Mammary epithelial cell (primary cell): ENCODE measurements at regions of chr17 and their contacts with region 1.

Region 1: DNA sequence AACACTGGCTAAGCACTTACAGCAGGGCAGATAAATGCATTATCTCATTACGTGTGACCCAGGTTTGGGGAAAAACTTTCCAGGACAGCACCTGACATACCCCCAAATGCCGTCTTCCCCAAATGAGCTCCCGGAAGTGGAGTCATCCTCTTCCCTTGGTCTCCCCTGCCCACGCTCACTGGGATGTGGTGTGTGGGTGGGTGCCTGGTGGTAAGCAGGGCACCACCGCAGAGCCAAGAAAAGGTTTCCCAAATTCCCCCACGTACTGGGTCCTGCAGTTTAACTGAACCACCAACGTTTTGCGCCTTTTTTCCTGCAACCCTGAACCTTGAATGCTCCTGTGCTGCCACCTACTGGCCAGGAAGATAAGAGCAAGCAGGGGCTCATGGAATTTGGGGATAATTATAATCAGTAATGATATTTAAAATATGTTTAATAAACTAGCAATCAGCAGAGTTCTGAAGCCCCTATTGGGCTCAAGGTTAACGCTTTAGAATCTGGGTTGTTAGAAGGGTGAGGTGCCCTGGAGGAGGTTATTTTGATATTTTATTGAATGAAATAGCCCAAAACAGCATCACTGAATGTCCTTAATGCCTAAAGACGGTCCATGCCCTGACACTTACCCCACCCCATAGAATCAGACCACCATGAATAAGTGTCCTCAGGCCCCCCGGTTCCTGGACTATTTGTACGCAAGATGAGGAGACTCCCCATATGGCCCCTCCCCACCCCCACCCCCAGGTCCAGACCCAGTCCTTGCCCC is 8.0 kb downstream of the SPPL2C start:
- DNase-seq: peak; percentile 22
- H3K4me3 ChIP-seq: no peak overlapping the region
- H3K27ac ChIP-seq: no peak overlapping the region
- H3K4me1 ChIP-seq: no peaks in the 10 kb centered on the region
- H3K27me3 ChIP-seq: no peaks in the 10 kb centered on the region
- CTCF ChIP-seq: peak; percentile 90

Region 2: DNA sequence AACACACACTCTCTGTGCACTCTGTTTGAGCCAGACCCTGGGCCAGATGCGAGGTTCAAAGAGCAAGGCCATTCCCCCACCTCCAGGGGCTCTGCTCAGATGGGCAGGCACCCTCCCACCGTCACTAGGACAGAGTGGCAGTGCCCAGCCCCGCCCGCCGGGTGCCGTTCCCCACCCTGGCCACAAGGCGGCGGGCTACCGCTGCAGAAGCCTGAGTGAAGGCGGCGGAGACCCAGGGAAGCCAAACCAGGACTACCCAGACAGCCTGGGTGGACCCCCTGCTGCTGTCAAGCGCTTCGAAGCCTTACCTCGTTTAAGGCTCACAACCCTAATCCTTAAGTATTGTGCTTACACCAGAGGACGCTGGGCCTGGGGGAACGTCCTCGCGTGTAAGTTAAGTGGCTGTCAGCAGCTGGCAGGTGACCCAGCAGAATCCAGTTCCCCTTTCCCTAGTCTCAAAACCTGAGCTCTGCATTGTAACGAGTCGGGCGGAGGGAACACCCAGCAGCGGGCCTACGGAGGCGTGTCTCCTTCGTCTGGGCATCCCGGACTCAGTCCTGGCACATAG is 424.6 kb before region 1 on chr17:
- CTCF ChIA-PET with region 1: no interaction called
- dilution Hi-C with region 1: no loop called
- in situ Hi-C with region 1: loop called in 1 of 2 experiments (anchors 25 kb)
- intact Hi-C with region 1: loop called (anchors 2 kb)
- DNase-seq: peak; percentile 63
- H3K4me3 ChIP-seq: no peak overlapping the region
- H3K27ac ChIP-seq: no peak overlapping the region
- H3K4me1 ChIP-seq: peaks cover 29% of the 10 kb centered on the region
- H3K27me3 ChIP-seq: no peaks in the 10 kb centered on the region
- CTCF ChIP-seq: peak; percentile 85 to 97

Region 3: DNA sequence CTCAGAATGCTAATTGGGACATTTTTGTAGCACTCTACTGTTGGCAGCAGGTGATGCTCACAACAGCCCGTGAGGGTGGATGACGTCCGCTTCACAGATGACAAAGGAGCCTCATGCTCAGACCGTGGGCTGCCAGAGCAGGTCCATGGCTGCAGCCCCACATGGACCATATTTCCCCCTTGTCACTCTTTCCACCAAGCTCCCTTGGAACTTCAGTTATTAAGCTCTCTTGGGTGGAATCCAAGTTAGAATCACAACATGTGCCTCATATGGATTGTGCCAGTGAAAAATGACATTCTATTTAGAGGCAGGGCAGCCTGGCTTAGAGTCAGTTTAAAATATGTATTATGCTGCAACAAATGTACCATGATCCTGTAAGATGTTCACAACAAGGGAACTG is 113.1 kb after region 1 on chr17:
- CTCF ChIA-PET with region 1: no interaction called
- dilution Hi-C with region 1: loop called (anchors 10 kb)
- in situ Hi-C with region 1: no loop called
- intact Hi-C with region 1: no loop called
- DNase-seq: no peak
- H3K4me3 ChIP-seq: no peak overlapping the region
- H3K27ac ChIP-seq: no peak overlapping the region
- H3K4me1 ChIP-seq: no peaks in the 10 kb centered on the region
- H3K27me3 ChIP-seq: peaks cover 8% of the 10 kb centered on the region
- CTCF ChIP-seq: no peak